ENCODE measurements at regions of chr1 and their contacts with region 1.

Region 1: DNA sequence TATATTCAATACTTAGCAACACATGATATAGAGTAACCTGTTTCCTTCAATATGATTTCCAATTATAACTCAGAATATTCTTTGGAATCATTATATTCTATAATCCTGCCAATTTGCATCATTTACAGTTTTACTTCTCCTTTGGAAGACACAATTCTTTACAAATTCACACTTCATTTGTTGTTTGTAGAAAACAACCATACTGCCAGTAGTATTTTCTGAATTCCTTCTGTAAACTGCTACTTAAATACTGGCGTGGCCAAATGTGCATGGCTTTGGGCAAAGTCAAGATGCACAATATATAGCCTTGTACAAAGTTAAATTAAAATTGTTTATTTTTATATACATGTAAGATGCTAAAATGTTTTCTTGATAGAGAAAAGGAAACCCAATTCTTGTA is 687.1 kb upstream of the NEGR1 start:
- DNase-seq: no peak
- ATAC-seq: no peak
- H3K4me3 ChIP-seq: no peak overlapping the region
- H3K27ac ChIP-seq: no peak overlapping the region
- H3K4me1 ChIP-seq: no peaks in the 10 kb centered on the region
- H3K27me3 ChIP-seq: no peaks in the 10 kb centered on the region
- CTCF ChIP-seq: no peak
- EP300 ChIP-seq: no peak
- POLR2A ChIP-seq: no peak
- RAD21 ChIP-seq: no peak

Region 2: GRCh38 chr1:72892461-72892860 is 77.0 kb before region 1 on chr1:
- CTCF ChIA-PET with region 1: no interaction called
- POLR2A ChIA-PET with region 1: no interaction called
- in situ Hi-C with region 1: no loop called
- intact Hi-C with region 1: no loop called
- DNase-seq: no peak
- ATAC-seq: no peak
- H3K4me3 ChIP-seq: no peak overlapping the region
- H3K27ac ChIP-seq: no peak overlapping the region
- H3K4me1 ChIP-seq: no peaks in the 10 kb centered on the region
- H3K27me3 ChIP-seq: no peaks in the 10 kb centered on the region
- CTCF ChIP-seq: no peak
- EP300 ChIP-seq: no peak
- POLR2A ChIP-seq: no peak
- RAD21 ChIP-seq: no peak

Region 3: GRCh38 chr1:73306899-73307555 is 337.6 kb after region 1 on chr1:
- CTCF ChIA-PET with region 1: no interaction called
- POLR2A ChIA-PET with region 1: no interaction called
- in situ Hi-C with region 1: no loop called
- intact Hi-C with region 1: loop called (anchors 5 kb)
- DNase-seq: no peak
- ATAC-seq: no peak
- H3K4me3 ChIP-seq: no peak overlapping the region
- H3K27ac ChIP-seq: no peak overlapping the region
- H3K4me1 ChIP-seq: no peaks in the 10 kb centered on the region
- H3K27me3 ChIP-seq: no peaks in the 10 kb centered on the region
- CTCF ChIP-seq: no peak
- EP300 ChIP-seq: no peak
- POLR2A ChIP-seq: no peak
- RAD21 ChIP-seq: no peak